ENCODE measurements at regions of chr10 and their contacts with region 1.

Region 1: DNA sequence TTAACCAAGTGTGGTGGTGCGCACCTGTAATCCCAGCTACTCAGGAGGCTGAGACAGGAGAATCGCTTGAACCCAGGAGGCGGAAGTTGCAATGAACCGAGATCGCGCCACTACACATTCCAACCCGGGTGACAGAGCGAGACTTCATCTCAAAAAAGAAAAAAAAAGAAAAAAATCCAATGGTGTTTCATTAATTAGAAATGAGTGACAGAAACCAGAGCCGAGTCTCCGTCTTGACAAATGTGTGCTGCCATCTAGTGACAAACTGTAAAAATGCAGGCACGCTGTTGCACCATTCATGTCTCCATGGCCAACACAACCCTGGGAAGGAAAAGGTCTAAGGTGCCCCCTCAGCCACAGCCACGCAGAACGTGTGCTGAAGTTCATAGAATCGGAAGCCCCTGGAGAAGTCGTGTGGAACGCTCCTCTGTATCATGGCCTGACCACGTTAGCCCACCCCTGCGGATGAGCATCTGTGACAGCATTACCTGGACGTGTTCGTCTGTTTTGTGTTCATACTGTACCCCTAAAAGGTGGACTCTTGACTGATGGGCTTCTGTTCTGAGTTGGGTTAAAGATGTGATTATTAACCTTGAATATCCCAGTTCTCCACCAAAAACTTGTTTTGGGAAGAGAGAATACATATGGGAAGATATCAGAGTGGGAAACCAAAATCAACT is 94.9 kb downstream of the LYZL2 start:
- DNase-seq: peak; percentile 42 to 61
- ATAC-seq: peak; percentile 61 to 81
- H3K4me3 ChIP-seq: no peak overlapping the region
- H3K27ac ChIP-seq: no peak overlapping the region
- H3K4me1 ChIP-seq: peaks cover 0 to 5% of the 10 kb centered on the region in 2 donors
- H3K27me3 ChIP-seq: no peaks in the 10 kb centered on the region
- CTCF ChIP-seq: peak; percentile 82 to 89 (median 87)
- POLR2A ChIP-seq: no peak

Region 2: GRCh38 chr10:29470355-29470705 is 1064.3 kb before region 1 on chr10:
- in situ Hi-C with region 1: no loop called
- intact Hi-C with region 1: no loop called
- DNase-seq: peak in 1 of 2 donors; percentile 61
- ATAC-seq: peak in 1 of 2 donors; percentile 4
- H3K4me3 ChIP-seq: no peak overlapping the region
- H3K27ac ChIP-seq: peak overlapping the region; percentile 69 to 86 (median 82)
- H3K4me1 ChIP-seq: peaks cover 65 to 74% of the 10 kb centered on the region in 2 donors
- H3K27me3 ChIP-seq: no peaks in the 10 kb centered on the region
- CTCF ChIP-seq: peak; percentile 12 to 62 (median 59)
- POLR2A ChIP-seq: no peak

Region 3: GRCh38 chr10:30392564-30392990 is 142.0 kb before region 1 on chr10:
- in situ Hi-C with region 1: no loop called
- intact Hi-C with region 1: loop called (anchors 1 kb)
- DNase-seq: peak; percentile 41 to 52
- ATAC-seq: peak; percentile 94 to 97
- H3K4me3 ChIP-seq: peak overlapping the region in 2 of 4 donors; percentile 22 to 37
- H3K27ac ChIP-seq: no peak overlapping the region
- H3K4me1 ChIP-seq: peaks cover 0 to 3% of the 10 kb centered on the region in 2 donors
- H3K27me3 ChIP-seq: peaks cover 0 to 7% (median 0%) of the 10 kb centered on the region in 3 donors
- CTCF ChIP-seq: peak; percentile 80 to 99 (median 91)
- POLR2A ChIP-seq: no peak

Region 4: GRCh38 chr10:30413996-30414576 is 120.5 kb before region 1 on chr10:
- in situ Hi-C with region 1: loop called (anchors 5 kb)
- intact Hi-C with region 1: loop called (anchors 1 kb)
- DNase-seq: peak in 1 of 2 donors; percentile 27
- ATAC-seq: peak; percentile 92 to 94
- H3K4me3 ChIP-seq: no peak overlapping the region
- H3K27ac ChIP-seq: no peak overlapping the region
- H3K4me1 ChIP-seq: peaks cover 0 to 4% of the 10 kb centered on the region in 2 donors
- H3K27me3 ChIP-seq: no peaks in the 10 kb centered on the region
- CTCF ChIP-seq: peak; percentile 77 to 86 (median 82)
- POLR2A ChIP-seq: no peak

Region 5: DNA sequence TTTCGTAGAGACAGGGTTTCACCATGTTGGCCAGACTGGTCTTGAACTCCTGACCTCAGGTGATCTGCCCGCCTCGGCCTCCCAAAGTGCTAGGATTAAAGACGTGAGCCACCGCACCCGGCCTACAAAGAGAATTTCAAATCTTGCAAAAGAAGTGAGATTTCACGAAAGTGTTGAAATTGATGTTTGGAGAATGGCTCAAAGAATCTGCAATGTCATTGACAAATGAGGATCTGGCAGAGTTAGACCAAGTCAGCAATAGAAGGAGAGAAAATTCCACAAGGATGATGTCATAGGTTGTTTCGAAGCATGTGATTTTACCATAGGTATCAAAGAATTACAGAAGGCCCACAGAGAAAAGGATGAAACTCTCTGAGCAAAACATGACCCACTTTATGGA is 23.3 kb after region 1 on chr10:
- in situ Hi-C with region 1: no loop called
- intact Hi-C with region 1: no loop called
- DNase-seq: no peak
- ATAC-seq: no peak
- H3K4me3 ChIP-seq: no peak overlapping the region
- H3K27ac ChIP-seq: no peak overlapping the region
- H3K4me1 ChIP-seq: peaks cover 0 to 5% of the 10 kb centered on the region in 2 donors
- H3K27me3 ChIP-seq: no peaks in the 10 kb centered on the region
- CTCF ChIP-seq: no peak
- POLR2A ChIP-seq: no peak

Region 6: GRCh38 chr10:30579574-30579973 is 45.0 kb after region 1 on chr10:
- in situ Hi-C with region 1: no loop called
- intact Hi-C with region 1: loop called (anchors 5 kb)
- DNase-seq: no peak
- ATAC-seq: no peak
- H3K4me3 ChIP-seq: no peak overlapping the region
- H3K27ac ChIP-seq: no peak overlapping the region
- H3K4me1 ChIP-seq: no peaks in the 10 kb centered on the region
- H3K27me3 ChIP-seq: no peaks in the 10 kb centered on the region
- CTCF ChIP-seq: no peak
- POLR2A ChIP-seq: no peak

Region 7: DNA sequence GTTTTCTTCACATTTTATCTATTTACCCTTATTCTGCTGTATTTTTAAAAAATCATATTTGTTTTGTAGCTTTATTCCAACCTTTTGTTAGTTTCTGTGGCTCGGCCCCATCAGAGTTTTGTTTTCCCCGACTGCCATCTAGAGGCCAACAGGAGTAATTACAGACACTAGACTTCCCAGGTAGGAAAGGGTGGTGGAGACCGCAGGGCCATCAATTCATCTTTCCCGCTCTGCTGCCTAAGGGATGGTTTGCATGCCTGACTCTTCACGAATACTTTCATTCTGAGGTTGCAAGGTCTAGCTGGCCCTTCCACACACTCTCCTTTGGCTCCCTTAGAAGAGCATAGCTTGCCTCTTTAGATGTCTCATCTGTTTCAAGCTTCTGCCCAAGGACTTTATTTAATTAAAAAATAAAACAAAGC is 56.7 kb after region 1 on chr10:
- in situ Hi-C with region 1: loop called in 2 of 4 experiments (anchors 5 to 10 kb)
- intact Hi-C with region 1: no loop called
- DNase-seq: no peak
- ATAC-seq: peak; percentile 62 to 66
- H3K4me3 ChIP-seq: no peak overlapping the region
- H3K27ac ChIP-seq: no peak overlapping the region
- H3K4me1 ChIP-seq: no peaks in the 10 kb centered on the region
- H3K27me3 ChIP-seq: no peaks in the 10 kb centered on the region
- CTCF ChIP-seq: peak; percentile 73 to 81 (median 76)
- POLR2A ChIP-seq: no peak